Activated naive CD4-positive, alpha-beta T cell treated with anti-CD3 and anti-CD28 coated beads for 36 hours (primary cell): ENCODE measurements at regions of chr2 and their contacts with region 1.

Region 1: GRCh38 chr2:174341286-174341994 is 6.7 kb downstream of the SP9 start:
- DNase-seq: peak; percentile 93
- H3K4me3 Mint-ChIP-seq: peak overlapping the region; percentile 62
- H3K27ac Mint-ChIP-seq: peak overlapping the region; percentile 51
- H3K4me1 Mint-ChIP-seq: peaks cover 37% of the 10 kb centered on the region
- H3K27me3 Mint-ChIP-seq: peaks cover 62% of the 10 kb centered on the region

Region 2: GRCh38 chr2:173402405-173402974 is 939.0 kb before region 1 on chr2:
- CTCF ChIA-PET with region 1: interaction called, 14 read pairs
- intact Hi-C with region 1: loop called (anchors 1 kb)
- DNase-seq: peak; percentile 85
- H3K4me3 Mint-ChIP-seq: no peak overlapping the region
- H3K27ac Mint-ChIP-seq: no peak overlapping the region
- H3K4me1 Mint-ChIP-seq: peaks cover 6% of the 10 kb centered on the region
- H3K27me3 Mint-ChIP-seq: peaks cover 53% of the 10 kb centered on the region

Region 3: GRCh38 chr2:173752152-173752551 is 589.3 kb before region 1 on chr2:
- CTCF ChIA-PET with region 1: interaction called, 4 read pairs
- intact Hi-C with region 1: loop called (anchors 2 kb)
- DNase-seq: peak; percentile 19
- H3K4me3 Mint-ChIP-seq: no peak overlapping the region
- H3K27ac Mint-ChIP-seq: no peak overlapping the region
- H3K4me1 Mint-ChIP-seq: no peaks in the 10 kb centered on the region
- H3K27me3 Mint-ChIP-seq: peaks cover 7% of the 10 kb centered on the region

Region 4: GRCh38 chr2:174039551-174040416 is 301.7 kb before region 1 on chr2:
- CTCF ChIA-PET with region 1: interaction called, 4 read pairs
- intact Hi-C with region 1: loop called (anchors 2 kb)
- DNase-seq: peak; percentile 92
- H3K4me3 Mint-ChIP-seq: peak overlapping the region; percentile 35
- H3K27ac Mint-ChIP-seq: peak overlapping the region; percentile 86
- H3K4me1 Mint-ChIP-seq: peaks cover 13% of the 10 kb centered on the region
- H3K27me3 Mint-ChIP-seq: no peaks in the 10 kb centered on the region

Region 5: GRCh38 chr2:174158003-174158402 is 183.4 kb before region 1 on chr2:
- CTCF ChIA-PET with region 1: interaction called, 5 read pairs
- intact Hi-C with region 1: loop called (anchors 1 kb)
- DNase-seq: peak; percentile 49
- H3K4me3 Mint-ChIP-seq: no peak overlapping the region
- H3K27ac Mint-ChIP-seq: no peak overlapping the region
- H3K4me1 Mint-ChIP-seq: peaks cover 9% of the 10 kb centered on the region
- H3K27me3 Mint-ChIP-seq: no peaks in the 10 kb centered on the region

Region 6: DNA sequence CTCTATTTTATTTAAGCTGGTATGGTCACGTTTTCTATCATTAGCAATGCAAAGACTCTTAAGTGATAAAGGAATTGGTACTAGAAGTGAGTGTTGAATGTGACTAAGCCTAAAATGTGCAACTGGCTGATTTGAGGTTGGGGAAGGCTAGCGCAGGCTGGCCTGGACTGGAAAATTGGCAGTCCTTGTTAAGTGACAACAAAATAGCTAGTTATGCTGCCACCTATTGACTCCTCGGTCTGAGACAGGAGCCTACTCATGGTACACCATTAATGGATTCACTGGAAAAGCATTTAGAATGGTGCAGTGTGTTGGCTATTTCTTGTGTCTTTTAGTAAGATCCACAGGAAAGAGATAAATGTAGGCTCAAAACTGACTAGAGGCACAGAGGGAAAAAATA is 261.8 kb after region 1 on chr2:
- CTCF ChIA-PET with region 1: no interaction called
- intact Hi-C with region 1: loop called (anchors 5 kb)
- DNase-seq: peak; percentile 85
- H3K4me3 Mint-ChIP-seq: no peak overlapping the region
- H3K27ac Mint-ChIP-seq: peak overlapping the region; percentile 76
- H3K4me1 Mint-ChIP-seq: peaks cover 81% of the 10 kb centered on the region
- H3K27me3 Mint-ChIP-seq: no peaks in the 10 kb centered on the region